PC-9 (cell line): ENCODE measurements at regions of chr12 and their contacts with region 1.

Region 1: GRCh38 chr12:60494244-60494643 is 898.4 kb downstream of the SLC16A7 start:
- DNase-seq: no peak
- H3K4me3 ChIP-seq: no peak overlapping the region
- H3K27ac ChIP-seq: no peak overlapping the region
- H3K4me1 ChIP-seq: no peaks in the 10 kb centered on the region
- H3K27me3 ChIP-seq: no peaks in the 10 kb centered on the region
- CTCF ChIP-seq: peak; percentile 72

Region 2: GRCh38 chr12:58907391-58907790 is 1586.9 kb before region 1 on chr12:
- CTCF ChIA-PET with region 1: no interaction called
- POLR2A ChIA-PET with region 1: no interaction called
- intact Hi-C with region 1: no loop called
- DNase-seq: no peak
- H3K4me3 ChIP-seq: no peak overlapping the region
- H3K27ac ChIP-seq: no peak overlapping the region
- H3K4me1 ChIP-seq: no peaks in the 10 kb centered on the region
- H3K27me3 ChIP-seq: no peaks in the 10 kb centered on the region
- CTCF ChIP-seq: no peak

Region 3: DNA sequence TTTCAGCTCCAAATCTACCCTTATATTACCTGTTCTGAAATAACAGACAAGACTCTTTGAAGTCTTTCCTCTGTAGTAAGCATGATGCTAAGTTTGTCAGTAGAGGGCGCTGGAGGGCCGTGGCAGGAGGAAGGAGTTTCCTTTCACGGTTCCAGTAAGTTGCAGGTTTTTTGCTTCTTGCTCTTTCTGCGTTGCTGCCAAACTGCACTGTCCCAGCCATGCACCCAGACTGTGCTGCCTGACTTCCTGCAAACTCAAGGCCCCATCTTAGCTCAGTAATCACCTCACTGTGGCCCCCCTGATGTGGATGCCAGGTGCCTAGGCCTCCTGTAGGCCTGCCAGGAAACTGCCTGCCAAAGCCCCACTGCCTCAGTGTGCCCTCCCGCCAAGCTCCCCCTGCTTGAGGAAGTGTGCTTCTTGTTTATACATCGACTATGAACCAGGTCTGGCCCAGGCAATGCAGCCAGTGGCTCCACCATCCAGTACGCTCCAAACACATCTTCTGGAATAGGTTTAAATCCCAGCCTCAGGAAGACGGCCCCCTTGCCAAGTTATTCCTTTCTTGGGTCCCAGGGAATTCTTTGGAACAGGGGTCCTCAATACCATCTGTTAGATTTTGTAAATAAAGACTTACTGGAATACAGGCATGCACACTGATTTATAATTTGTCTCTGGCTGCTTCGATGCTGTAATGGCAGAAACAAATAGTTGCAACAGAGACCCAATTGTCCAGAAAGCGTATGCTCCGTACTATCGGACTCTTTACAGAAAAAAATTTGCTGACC is 1380.2 kb before region 1 on chr12:
- CTCF ChIA-PET with region 1: no interaction called
- POLR2A ChIA-PET with region 1: no interaction called
- intact Hi-C with region 1: loop called (anchors 10 kb)
- DNase-seq: peak; percentile 51 to 64
- H3K4me3 ChIP-seq: no peak overlapping the region
- H3K27ac ChIP-seq: no peak overlapping the region
- H3K4me1 ChIP-seq: no peaks in the 10 kb centered on the region
- H3K27me3 ChIP-seq: no peaks in the 10 kb centered on the region
- CTCF ChIP-seq: peak; percentile 88

Region 4: DNA sequence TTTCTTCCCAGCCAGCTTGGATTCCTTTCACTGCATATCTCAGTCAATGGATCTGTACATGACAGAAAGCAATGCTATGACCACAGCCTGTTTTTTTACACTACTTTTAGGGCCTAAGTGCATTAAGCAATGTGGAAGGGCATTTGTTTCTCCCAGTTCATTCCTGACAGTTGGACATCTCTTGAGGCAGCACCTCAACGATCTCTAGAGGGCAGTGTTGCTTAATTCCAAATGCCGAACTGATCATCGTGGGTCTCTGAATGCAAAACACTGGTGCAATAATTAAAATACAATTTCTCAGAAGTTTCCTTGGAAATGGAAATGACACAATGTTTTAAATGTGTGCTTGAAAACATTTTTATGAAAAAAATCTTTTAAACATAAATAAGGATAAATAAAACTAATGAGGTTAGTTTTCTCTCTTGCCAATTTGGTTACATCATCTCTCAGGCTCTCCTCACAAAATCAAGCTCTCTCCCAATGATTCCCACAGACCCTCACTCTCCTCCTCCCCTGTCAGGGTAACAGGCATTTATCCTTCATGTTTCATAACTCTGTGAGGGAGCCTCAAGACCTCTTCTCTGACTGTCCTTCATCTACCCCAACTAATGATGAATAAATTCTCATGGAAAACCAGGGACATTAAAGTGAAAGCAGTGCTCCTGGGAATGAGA is 1090.8 kb before region 1 on chr12:
- CTCF ChIA-PET with region 1: no interaction called
- POLR2A ChIA-PET with region 1: no interaction called
- intact Hi-C with region 1: loop called (anchors 10 kb)
- DNase-seq: peak in 1 of 2 experiments; percentile 36
- H3K4me3 ChIP-seq: no peak overlapping the region
- H3K27ac ChIP-seq: no peak overlapping the region
- H3K4me1 ChIP-seq: no peaks in the 10 kb centered on the region
- H3K27me3 ChIP-seq: no peaks in the 10 kb centered on the region
- CTCF ChIP-seq: peak; percentile 78

Region 5: GRCh38 chr12:60106214-60106613 is 388.0 kb before region 1 on chr12:
- CTCF ChIA-PET with region 1: interaction called, 4 read pairs
- POLR2A ChIA-PET with region 1: no interaction called
- intact Hi-C with region 1: loop called (anchors 5 kb)
- DNase-seq: no peak
- H3K4me3 ChIP-seq: no peak overlapping the region
- H3K27ac ChIP-seq: no peak overlapping the region
- H3K4me1 ChIP-seq: no peaks in the 10 kb centered on the region; the same call in 1 of the 2 replicates
- H3K27me3 ChIP-seq: no peaks in the 10 kb centered on the region
- CTCF ChIP-seq: no peak; the same call in 1 of the 2 replicates

Region 6: DNA sequence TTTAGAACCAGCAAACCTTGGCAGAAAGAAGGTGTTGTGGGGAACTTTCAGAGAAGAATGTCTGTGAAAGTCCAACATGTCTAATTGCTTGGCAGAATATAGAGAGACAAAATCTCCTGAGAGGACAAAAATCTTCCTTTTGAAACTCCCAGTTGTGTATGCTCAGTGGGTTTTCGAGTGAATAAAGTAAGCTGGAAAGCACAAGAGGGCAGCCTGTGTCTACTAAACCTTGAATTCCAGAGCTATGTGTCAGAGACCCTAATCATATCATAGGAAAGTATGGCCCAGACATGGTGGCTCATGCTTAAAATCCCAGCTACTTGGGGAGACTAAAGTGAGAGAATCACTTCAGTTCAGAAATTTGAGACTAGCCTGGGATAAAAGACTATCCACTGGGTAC is 237.2 kb before region 1 on chr12:
- CTCF ChIA-PET with region 1: interaction called, 3 read pairs
- POLR2A ChIA-PET with region 1: no interaction called
- intact Hi-C with region 1: loop called (anchors 2 kb)
- DNase-seq: no peak
- H3K4me3 ChIP-seq: no peak overlapping the region
- H3K27ac ChIP-seq: no peak overlapping the region
- H3K4me1 ChIP-seq: no peaks in the 10 kb centered on the region
- H3K27me3 ChIP-seq: no peaks in the 10 kb centered on the region
- CTCF ChIP-seq: no peak

Region 7: DNA sequence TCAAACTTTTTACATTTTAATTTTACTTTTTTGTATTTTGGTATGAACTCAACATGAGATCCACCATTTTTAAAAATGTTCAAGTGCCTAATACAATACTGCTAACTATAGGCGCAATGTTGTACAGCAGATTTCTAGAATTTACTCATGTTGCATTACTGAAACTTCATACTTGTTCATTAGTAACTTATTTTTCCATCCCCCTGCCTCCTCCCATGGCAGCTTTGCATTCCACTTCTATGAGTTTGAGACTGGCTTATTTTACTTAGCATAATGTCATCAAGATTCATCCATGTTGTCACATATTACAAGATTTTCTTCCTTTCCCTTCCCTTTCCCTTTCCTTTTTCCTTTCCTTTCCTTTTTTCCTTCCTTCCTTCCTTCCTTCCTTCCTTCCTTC is 72.5 kb before region 1 on chr12:
- CTCF ChIA-PET with region 1: no interaction called
- POLR2A ChIA-PET with region 1: no interaction called
- intact Hi-C with region 1: no loop called
- DNase-seq: no peak
- H3K4me3 ChIP-seq: no peak overlapping the region
- H3K27ac ChIP-seq: no peak overlapping the region
- H3K4me1 ChIP-seq: no peaks in the 10 kb centered on the region
- H3K27me3 ChIP-seq: no peaks in the 10 kb centered on the region
- CTCF ChIP-seq: no peak

Region 8: GRCh38 chr12:60947533-60947932 is 453.3 kb after region 1 on chr12:
- CTCF ChIA-PET with region 1: no interaction called
- POLR2A ChIA-PET with region 1: no interaction called
- intact Hi-C with region 1: no loop called
- DNase-seq: no peak
- H3K4me3 ChIP-seq: no peak overlapping the region
- H3K27ac ChIP-seq: no peak overlapping the region
- H3K4me1 ChIP-seq: no peaks in the 10 kb centered on the region
- H3K27me3 ChIP-seq: no peaks in the 10 kb centered on the region
- CTCF ChIP-seq: no peak

Region 9: DNA sequence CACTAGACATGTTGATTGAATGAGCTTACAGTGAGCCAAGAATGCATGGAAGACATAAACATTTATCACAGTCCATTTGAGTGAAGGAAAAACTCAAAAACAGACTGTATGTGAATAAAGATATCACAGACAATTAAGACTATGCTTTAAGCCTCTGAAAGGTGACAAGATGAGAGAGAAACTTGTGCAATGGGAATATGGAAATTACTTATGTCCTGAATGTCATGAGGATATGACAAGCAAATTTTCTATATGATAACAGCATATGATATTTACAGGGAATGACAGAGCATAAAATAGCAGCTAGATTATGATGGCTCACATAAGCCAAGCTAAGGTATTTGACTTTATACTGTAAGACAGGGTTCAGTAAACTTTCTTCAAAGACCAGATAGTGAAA is 612.9 kb after region 1 on chr12:
- CTCF ChIA-PET with region 1: no interaction called
- POLR2A ChIA-PET with region 1: no interaction called
- intact Hi-C with region 1: no loop called
- DNase-seq: no peak
- H3K4me3 ChIP-seq: no peak overlapping the region
- H3K27ac ChIP-seq: no peak overlapping the region
- H3K4me1 ChIP-seq: no peaks in the 10 kb centered on the region
- H3K27me3 ChIP-seq: no peaks in the 10 kb centered on the region
- CTCF ChIP-seq: no peak